Activated CD4-positive, alpha-beta T cell treated with anti-CD3 and anti-CD28 coated beads, Interleukin-2, amount 10 ng/mL, durations not matched to agents 24 days and 14 days (primary cell): ENCODE measurements at regions of chr9 and their contacts with region 1.

Region 1: DNA sequence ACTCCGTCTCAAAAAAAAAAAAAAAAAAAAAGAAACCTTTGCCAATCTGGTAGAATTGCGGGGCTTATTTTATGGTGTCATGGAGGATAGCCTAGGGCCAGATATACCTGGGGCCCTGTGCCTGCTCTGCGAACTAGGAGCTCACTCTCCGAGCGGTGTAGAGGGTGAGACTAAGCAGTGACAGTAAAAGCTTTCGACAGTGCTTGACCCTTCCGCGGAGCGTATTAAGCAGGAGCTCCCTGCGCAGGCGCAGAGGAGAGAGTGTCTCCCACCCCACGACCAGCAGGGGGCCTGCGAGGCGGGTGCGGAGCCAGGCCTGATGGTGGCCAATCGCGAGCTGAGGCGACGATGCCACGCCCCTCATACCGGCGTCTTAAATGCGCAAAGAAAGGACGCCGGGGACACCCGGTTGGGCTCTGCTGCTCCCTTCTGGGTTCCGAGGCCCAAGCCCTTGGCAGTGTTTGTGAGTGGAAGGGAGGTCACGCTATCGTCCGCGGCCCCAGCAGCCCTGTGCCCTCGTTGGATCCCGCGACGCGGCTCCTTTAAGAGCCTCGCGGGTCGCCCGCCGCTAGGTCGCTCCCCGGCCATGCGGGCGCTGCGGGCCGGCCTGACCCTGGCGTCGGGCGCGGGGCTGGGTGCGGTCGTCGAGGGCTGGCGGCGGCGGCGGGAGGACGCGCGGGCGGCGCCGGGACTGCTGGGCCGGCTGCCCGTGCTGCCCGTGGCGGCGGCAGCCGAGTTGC is at the start of gene ENDOG:
- DNase-seq: peak; percentile 100
- H3K4me3 Mint-ChIP-seq: peak within 1 kb of the TSS; percentile 85
- H3K27ac Mint-ChIP-seq: peak within 1 kb of the TSS; percentile 84
- H3K4me1 Mint-ChIP-seq: peaks cover 12% of the 10 kb centered on the region
- H3K27me3 Mint-ChIP-seq: no peaks in the 10 kb centered on the region
- total RNA-seq, gene ENDOG: 22.9 and 23.3 TPM in 2 replicates

Region 2: GRCh38 chr9:128504485-128505413 is 313.5 kb before region 1 on chr9 and contains the start of gene GLE1:
- intact Hi-C with region 1: loop called (anchors 2 kb)
- DNase-seq: peak; percentile 100
- H3K4me3 Mint-ChIP-seq: peak within 1 kb of the TSS; percentile 96
- H3K27ac Mint-ChIP-seq: peak within 1 kb of the TSS; percentile 95
- H3K4me1 Mint-ChIP-seq: peaks cover 25% of the 10 kb centered on the region
- H3K27me3 Mint-ChIP-seq: no peaks in the 10 kb centered on the region
- total RNA-seq, gene GLE1: 53.3 and 54.1 TPM in 2 replicates

Region 3: DNA sequence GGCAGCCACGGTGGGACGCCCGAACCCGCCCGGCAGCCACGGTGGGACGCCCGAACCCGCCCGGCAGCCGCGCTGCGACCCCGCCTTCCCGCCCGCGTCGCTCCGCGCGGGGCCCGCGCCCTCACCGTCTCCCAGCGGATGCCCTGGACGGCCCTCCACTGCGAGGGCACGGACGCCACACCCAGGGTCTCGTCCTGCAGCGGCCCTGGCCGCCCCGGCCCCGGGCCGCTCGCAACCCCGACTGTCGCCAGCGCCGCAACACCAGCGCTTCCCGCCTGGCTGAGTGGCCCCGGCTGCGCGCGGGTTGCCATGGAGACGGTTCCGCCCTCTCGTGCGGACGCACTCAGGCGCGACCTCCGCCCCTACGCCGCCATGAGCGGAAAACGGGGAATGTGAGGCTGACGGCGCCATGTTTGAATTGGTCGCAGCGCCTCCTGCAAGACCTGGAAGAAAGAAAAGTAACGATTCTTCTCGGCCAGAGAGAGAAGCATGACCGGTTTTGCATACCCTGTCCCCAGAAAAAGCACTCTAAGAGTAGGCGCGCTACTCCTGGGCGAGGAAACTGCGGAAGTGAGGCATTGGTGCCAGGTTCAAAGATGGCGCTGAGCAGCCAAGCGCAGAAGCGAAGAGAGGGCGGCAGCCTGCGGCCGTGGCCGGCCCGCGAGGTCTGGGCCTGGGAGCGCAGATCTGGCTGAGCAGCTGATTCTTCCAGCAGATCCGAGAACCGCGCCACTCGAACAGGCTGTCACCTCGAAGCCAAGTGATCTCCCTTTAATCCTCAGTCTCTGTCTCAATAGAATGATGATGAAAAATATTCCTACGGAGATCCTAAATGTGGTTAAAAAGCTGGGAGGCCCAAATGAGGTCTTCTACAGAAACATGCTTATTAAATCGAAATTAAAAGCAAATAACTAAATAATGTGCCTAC is 161.6 kb before region 1 on chr9 and contains the start of gene DYNC2I2:
- intact Hi-C with region 1: loop called (anchors 2 kb)
- DNase-seq: peak; percentile 99
- H3K4me3 Mint-ChIP-seq: peak within 1 kb of the TSS; percentile 90
- H3K27ac Mint-ChIP-seq: peak within 1 kb of the TSS; percentile 100
- H3K4me1 Mint-ChIP-seq: peaks cover 10% of the 10 kb centered on the region
- H3K27me3 Mint-ChIP-seq: no peaks in the 10 kb centered on the region
- total RNA-seq, gene DYNC2I2: 47.4 and 47.7 TPM in 2 replicates

Region 4: DNA sequence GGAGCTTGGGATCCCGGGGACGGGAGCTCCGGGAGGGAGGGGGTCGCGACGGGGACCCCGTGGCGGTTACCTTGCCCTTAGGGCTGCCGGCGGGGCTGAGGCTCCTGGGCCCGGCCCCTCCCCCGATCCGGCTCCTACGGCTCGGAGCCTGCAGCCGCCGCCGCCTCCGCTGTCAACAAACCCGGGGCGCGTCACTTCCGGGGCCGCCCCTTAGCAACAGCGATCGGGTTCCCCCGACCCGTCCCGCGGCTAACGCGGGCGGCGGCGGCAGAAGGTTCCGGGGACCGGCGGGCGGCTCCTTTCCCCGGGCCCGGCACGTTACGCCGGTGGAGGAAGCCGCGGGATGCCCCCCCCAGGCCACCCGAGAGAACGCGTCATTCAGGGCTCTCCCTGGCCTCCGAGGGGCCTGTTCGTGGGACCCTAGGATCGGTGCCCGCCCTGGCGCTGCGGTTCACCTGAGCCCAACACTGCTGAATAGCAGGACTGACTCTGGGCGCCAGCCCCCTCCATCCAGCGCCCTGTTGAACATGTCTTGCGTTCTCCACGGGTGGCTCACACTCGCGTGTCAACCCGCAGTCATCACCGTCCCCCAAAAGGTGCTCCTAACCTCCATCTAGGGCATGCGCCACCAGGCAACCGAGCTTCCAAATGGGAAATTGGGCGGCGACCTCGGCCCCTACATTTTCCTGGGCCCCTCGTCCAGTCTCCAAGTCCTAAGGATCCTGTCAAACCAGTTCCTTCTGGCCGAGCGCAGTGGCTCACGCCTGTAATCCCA is 46.3 kb before region 1 on chr9 and contains the start of gene ZER1:
- intact Hi-C with region 1: loop called (anchors 5 kb)
- DNase-seq: peak; percentile 99
- H3K4me3 Mint-ChIP-seq: peak within 1 kb of the TSS; percentile 87
- H3K27ac Mint-ChIP-seq: peak within 1 kb of the TSS; percentile 90
- H3K4me1 Mint-ChIP-seq: peaks cover 15% of the 10 kb centered on the region
- H3K27me3 Mint-ChIP-seq: no peaks in the 10 kb centered on the region
- total RNA-seq, gene ZER1: 12.3 and 14.4 TPM in 2 replicates

Region 5: DNA sequence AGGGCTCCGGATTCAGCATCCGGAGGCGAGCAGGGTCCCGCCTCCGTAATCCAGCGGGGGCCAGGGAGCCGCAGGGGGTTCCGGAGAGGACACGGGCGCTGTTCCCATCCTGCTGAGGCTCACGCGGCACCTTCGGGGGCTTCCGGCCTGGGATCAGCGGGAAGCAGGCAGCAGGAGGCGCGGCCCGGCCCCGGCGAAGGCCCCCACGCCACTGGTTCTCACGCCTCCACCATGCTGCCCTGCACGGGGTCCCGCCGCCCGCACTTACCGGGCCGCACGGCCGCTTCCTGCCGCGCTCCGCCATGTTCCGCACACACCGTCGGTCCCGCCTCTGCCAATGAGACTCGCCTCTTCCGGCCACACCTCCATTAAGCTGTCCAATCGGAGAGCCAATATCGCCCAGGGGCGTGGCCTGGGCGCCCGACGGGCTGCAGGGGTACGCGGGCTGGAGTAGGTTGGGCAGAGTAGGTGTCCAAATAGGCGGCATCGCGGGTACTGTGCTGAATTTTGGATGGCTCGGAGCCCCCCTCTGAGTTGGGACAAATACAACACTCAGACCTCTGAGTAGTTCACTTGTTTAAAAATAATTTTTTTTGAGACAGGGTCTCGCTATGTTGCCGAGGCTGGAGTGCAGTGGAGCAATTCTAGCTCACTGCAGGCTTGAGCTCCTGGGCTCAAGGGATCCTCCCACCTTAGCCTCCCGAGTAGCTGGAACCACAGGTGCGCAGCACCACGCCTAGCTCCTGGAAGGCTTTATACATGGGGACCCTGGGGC is 11.4 kb after region 1 on chr9 and contains the start of gene SPOUT1:
- intact Hi-C with region 1: loop called (anchors 1 kb)
- DNase-seq: peak; percentile 99
- H3K4me3 Mint-ChIP-seq: peak within 1 kb of the TSS; percentile 97
- H3K27ac Mint-ChIP-seq: peak within 1 kb of the TSS; percentile 93
- H3K4me1 Mint-ChIP-seq: peaks cover 10% of the 10 kb centered on the region
- H3K27me3 Mint-ChIP-seq: no peaks in the 10 kb centered on the region
- total RNA-seq, gene SPOUT1: 149 and 154 TPM in 2 replicates

Region 6: GRCh38 chr9:129093421-129094204 is 275.3 kb after region 1 on chr9:
- intact Hi-C with region 1: no loop called
- DNase-seq: no peak
- H3K4me3 Mint-ChIP-seq: no peak overlapping the region
- H3K27ac Mint-ChIP-seq: peak overlapping the region; percentile 48
- H3K4me1 Mint-ChIP-seq: no peaks in the 10 kb centered on the region
- H3K27me3 Mint-ChIP-seq: no peaks in the 10 kb centered on the region